AG04450 (cell line): ENCODE measurements at regions of chr5 and their contacts with region 1.

Region 1: GRCh38 chr5:147188200-147189108 is 46.4 kb upstream of the STK32A start:
- DNase-seq: peak; percentile 38
- H3K4me3 ChIP-seq: no peak overlapping the region
- H3K27ac ChIP-seq: no peak overlapping the region
- H3K27me3 ChIP-seq: no peaks in the 10 kb centered on the region
- CTCF ChIP-seq: peak; percentile 85

Region 2: GRCh38 chr5:146533260-146533857 is 655.1 kb before region 1 on chr5:
- CTCF ChIA-PET with region 1: interaction called, 84 read pairs
- POLR2A ChIA-PET with region 1: no interaction called
- DNase-seq: peak; percentile 7
- H3K4me3 ChIP-seq: no peak overlapping the region
- H3K27ac ChIP-seq: no peak overlapping the region
- H3K27me3 ChIP-seq: no peaks in the 10 kb centered on the region
- CTCF ChIP-seq: peak; percentile 91

Region 3: DNA sequence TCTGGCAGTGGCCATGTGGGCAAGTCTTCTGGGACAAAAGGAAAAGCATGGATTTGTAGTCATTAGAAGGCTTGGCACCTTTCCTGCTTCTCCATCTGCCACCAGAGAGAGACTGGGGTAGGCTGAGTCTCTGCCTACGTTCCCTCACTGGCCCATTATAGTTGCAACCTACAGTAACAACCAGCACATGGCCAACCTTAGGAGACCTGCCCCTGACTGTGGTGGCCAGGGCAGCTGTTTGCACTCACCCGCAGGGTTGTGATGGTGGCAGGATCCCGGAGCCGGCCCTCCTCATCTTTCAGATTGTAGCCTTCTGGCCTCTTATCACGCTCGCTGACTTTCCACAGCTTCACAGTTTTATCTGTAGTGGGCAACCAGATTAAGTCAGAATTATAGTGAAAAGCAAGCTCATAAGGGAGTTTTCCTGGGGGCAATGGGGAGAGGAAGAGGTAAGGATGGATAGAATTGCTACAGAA is 497.5 kb before region 1 on chr5:
- CTCF ChIA-PET with region 1: no interaction called
- POLR2A ChIA-PET with region 1: no interaction called
- DNase-seq: no peak
- H3K4me3 ChIP-seq: no peak overlapping the region
- H3K27ac ChIP-seq: no peak overlapping the region
- H3K27me3 ChIP-seq: no peaks in the 10 kb centered on the region
- CTCF ChIP-seq: no peak

Region 4: DNA sequence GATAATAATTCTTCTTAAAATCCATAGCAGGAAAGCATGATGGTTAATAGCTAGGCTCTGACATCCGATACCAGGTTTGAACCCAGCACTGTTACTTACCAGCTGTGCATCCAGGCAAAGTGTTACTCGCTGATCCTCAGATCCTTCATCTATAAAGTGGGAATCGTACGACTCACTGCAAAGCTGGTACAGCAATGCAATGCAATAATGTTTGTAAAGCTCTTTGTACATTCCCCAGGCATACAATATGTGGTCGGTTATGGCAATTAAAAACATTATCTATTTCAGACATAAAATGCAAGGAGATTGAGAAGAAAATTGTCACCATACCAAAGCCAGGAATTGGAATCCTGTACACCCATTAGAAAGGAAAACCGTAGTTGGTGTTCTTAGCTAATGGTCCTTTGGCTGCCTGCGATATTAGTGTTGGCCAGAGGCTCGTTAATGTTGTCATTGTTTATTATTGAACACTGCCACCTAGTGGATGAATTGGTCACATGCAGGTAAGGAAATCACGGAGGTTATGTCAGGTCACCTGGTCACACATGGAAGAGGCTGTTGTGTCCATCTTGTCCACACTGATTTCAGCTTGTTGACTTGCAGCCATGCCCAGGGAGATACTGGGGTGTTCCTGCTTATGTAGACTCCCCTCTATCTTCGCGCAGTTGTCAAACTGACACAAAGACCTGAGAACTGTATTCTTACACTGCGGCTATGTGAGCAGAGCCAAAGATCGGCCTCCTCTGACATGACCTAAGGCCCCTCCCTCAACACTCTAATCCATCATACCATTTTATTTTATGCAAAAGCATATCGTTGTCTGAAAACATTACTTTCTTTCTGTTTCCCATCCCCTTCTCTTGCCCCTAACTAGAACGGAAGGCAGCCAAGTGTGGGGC is 222.4 kb before region 1 on chr5:
- CTCF ChIA-PET with region 1: interaction called, 13 read pairs
- POLR2A ChIA-PET with region 1: no interaction called
- DNase-seq: peak; percentile 33
- H3K4me3 ChIP-seq: no peak overlapping the region
- H3K27ac ChIP-seq: no peak overlapping the region
- H3K27me3 ChIP-seq: no peaks in the 10 kb centered on the region
- CTCF ChIP-seq: peak; percentile 74

Region 5: DNA sequence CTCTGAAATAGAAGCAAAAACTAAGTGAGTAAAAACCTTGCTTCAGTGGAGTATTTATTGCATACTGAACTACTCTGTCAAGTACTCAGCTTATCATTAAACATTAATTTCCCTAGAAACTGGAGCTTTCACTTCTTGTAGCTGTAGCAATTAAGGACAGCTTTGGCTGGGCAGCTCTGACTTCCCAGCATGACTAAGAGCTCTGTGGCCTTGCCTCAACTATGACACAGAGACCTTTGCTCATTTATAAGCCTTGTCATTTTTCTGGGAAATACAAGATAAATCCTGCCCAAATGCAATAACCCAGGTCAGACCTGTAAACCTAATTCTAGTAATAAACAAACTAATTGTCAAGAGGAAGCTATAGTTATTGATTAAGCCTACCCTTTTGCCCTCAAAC is 19.1 kb before region 1 on chr5:
- CTCF ChIA-PET with region 1: interaction called, 17 read pairs
- POLR2A ChIA-PET with region 1: no interaction called
- DNase-seq: no peak
- H3K4me3 ChIP-seq: no peak overlapping the region
- H3K27ac ChIP-seq: no peak overlapping the region
- H3K27me3 ChIP-seq: no peaks in the 10 kb centered on the region
- CTCF ChIP-seq: no peak

Region 6: GRCh38 chr5:147203213-147203612 is 14.8 kb after region 1 on chr5:
- CTCF ChIA-PET with region 1: interaction called, 45 read pairs
- POLR2A ChIA-PET with region 1: no interaction called
- DNase-seq: no peak
- H3K4me3 ChIP-seq: no peak overlapping the region
- H3K27ac ChIP-seq: no peak overlapping the region
- H3K27me3 ChIP-seq: no peaks in the 10 kb centered on the region
- CTCF ChIP-seq: no peak

Region 7: DNA sequence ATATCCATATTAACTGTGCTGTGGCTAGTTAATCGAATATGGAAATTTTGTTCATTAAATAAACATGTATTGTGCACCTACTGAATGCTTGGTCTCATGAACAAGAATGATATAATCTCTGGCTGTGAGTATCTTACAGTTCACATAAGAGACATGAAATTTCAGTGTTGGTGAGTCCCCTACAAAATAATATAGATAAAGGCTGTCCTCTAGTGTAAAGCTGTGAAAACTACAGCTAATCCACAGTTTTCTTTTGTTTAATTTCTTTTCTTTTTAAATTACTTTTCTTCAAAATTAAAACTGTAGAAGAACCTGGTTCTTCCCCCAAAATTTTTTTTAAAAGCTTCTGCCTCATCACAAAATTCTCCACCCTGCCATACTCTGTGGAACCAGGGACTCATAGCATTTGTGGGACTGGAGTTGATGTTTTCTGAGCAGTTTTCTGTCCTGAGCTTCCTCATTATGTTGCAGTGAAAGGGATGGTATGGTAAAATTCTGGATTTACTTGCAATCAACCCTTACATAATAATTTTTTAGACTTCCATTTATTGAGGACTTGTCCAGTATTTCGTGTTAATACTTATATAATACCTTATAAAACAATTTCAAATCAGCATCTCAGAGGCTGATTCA is 181.4 kb after region 1 on chr5:
- CTCF ChIA-PET with region 1: interaction called, 22 read pairs
- POLR2A ChIA-PET with region 1: no interaction called
- DNase-seq: no peak
- H3K4me3 ChIP-seq: no peak overlapping the region
- H3K27ac ChIP-seq: no peak overlapping the region
- H3K27me3 ChIP-seq: peaks cover 2% of the 10 kb centered on the region
- CTCF ChIP-seq: peak; percentile 61